Kidney (tissue), 22 donors: ENCODE measurements at regions of chr12 and their contacts with region 1.

Region 1: GRCh38 chr12:89166525-89166934 is 185.8 kb downstream of the DUSP6 start:
- DNase-seq: peak in 1 of 5 donors; percentile 21
- H3K4me3 ChIP-seq: no peak overlapping the region
- H3K27ac ChIP-seq: no peak overlapping the region
- H3K4me1 ChIP-seq: no peaks in the 10 kb centered on the region
- H3K27me3 ChIP-seq: no peaks in the 10 kb centered on the region
- CTCF ChIP-seq: no peak

Region 2: GRCh38 chr12:88633312-88633711 is 533.2 kb before region 1 on chr12:
- intact Hi-C with region 1: no loop called
- DNase-seq: no peak
- H3K4me3 ChIP-seq: no peak overlapping the region
- H3K27ac ChIP-seq: no peak overlapping the region
- H3K4me1 ChIP-seq: no peaks in the 10 kb centered on the region
- H3K27me3 ChIP-seq: no peaks in the 10 kb centered on the region
- CTCF ChIP-seq: peak; percentile 19

Region 3: DNA sequence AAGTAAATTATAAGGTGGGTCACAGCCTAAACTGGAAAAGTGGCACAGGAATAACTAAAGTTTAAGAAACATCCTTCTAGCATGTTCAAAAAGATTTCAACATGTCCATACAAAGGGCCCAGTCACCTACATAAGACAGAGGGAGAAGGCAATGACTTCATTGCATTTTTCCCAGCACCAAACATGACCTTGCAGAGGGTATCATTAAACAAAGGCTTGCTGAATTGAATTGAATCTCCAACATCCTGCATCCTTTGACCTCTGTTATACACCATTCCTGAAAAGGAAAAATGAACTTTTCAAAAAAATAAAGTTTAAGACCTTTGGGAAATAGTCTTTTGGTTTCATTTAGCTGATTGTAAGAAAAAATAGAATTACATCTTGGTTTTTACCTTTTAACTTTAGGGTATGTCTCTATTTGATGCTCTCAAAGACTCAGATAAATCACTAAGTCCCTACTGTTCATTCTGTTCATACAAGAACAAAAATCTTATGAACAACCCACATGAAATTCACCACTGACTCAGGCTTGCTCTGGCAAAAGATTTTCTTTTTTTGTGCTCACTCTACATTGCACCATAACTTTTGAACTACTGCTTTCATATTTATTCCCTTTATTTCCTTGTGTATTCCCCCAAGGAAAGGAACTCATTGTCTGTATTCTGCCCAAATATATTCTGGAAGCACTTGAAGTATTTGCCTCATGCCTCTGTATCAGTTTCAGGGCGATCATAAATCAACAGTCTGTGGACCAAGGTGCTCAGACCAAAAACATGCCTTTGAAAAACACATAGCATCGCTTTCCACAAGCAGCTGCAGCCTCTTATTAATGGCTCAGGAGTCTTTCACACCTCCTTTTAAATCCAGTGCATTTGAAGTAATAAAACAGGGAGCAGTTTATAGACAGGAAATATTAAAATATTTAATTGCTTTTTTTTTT is 64.1 kb after region 1 on chr12:
- intact Hi-C with region 1: loop called (anchors 5 kb)
- DNase-seq: peak in 3 of 5 donors; percentile 42 to 83 (median 80)
- H3K4me3 ChIP-seq: no peak overlapping the region
- H3K27ac ChIP-seq: no peak overlapping the region
- H3K4me1 ChIP-seq: no peaks in the 10 kb centered on the region
- H3K27me3 ChIP-seq: no peaks in the 10 kb centered on the region
- CTCF ChIP-seq: no peak

Region 4: GRCh38 chr12:89417246-89417977 is 250.9 kb after region 1 on chr12:
- intact Hi-C with region 1: no loop called
- DNase-seq: no peak
- H3K4me3 ChIP-seq: no peak overlapping the region
- H3K27ac ChIP-seq: no peak overlapping the region
- H3K4me1 ChIP-seq: peaks cover 0 to 8% (median 0%) of the 10 kb centered on the region in 3 donors
- H3K27me3 ChIP-seq: no peaks in the 10 kb centered on the region
- CTCF ChIP-seq: no peak